B cell (primary cell): ENCODE measurements at regions of chr7 and their contacts with region 1.

Region 1: DNA sequence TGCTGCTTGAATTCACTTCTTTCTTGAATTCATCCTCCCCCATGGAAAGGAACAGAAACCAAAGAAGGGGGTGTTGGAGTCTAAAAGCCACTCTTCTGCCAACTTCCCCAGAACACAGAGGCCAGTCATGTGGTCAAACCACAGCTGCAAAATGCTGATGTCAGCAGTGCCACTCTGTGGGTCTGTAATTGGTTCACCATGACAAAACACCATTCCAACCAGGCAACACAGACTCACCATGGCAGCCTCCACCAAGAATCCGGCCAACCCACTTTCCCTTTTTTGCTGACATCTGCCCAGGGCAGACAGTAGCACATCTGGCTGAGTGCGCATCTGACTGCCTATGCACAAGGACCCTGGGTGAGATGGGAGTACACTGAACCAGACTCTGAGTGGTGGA is 16.8 kb downstream of the OSBPL3 start:
- DNase-seq: peak; percentile 88
- ATAC-seq: peak; percentile 88
- H3K4me3 ChIP-seq: no peak overlapping the region
- H3K4me3 Mint-ChIP-seq: peak overlapping the region; percentile 64
- H3K27ac ChIP-seq: peak overlapping the region; percentile 3 to 54
- H3K27ac Mint-ChIP-seq: peak overlapping the region; percentile 89
- H3K4me1 ChIP-seq: peaks cover 42 to 47% of the 10 kb centered on the region in 2 donors
- H3K4me1 Mint-ChIP-seq: peaks cover 80% of the 10 kb centered on the region
- H3K27me3 ChIP-seq: no peaks in the 10 kb centered on the region
- H3K27me3 Mint-ChIP-seq: no peaks in the 10 kb centered on the region
- CTCF ChIP-seq: no peak

Region 2: DNA sequence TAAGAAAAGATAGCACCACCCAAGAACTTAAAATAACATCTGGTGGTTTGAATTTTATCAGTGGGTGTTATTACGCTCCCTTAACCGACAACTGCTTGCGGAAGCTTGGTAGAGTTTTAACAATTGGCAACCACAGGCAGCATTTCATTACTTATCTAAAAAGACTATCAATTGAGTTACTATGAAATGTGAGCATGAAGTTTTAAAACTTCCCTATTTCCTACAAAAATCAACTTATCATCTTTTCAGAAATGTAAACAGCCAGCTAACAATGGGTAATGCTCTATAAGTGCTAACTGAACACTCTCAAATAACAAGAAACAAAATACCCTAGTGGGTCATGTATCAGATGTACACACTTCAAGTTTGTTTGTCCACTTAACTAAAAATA is 52.0 kb before region 1 on chr7:
- CTCF ChIA-PET with region 1: no interaction called
- POLR2A ChIA-PET with region 1: no interaction called
- intact Hi-C with region 1: loop called (anchors 5 kb)
- DNase-seq: peak; percentile 40
- ATAC-seq: peak; percentile 69
- H3K4me3 ChIP-seq: peak overlapping the region in 1 of 5 experiments; percentile 21
- H3K4me3 Mint-ChIP-seq: peak overlapping the region; percentile 73
- H3K27ac ChIP-seq: peak overlapping the region in 1 of 2 donors; percentile 17
- H3K27ac Mint-ChIP-seq: no peak overlapping the region
- H3K4me1 ChIP-seq: peaks cover 33 to 36% of the 10 kb centered on the region in 2 donors
- H3K4me1 Mint-ChIP-seq: peaks cover 50% of the 10 kb centered on the region
- H3K27me3 ChIP-seq: no peaks in the 10 kb centered on the region
- H3K27me3 Mint-ChIP-seq: no peaks in the 10 kb centered on the region
- CTCF ChIP-seq: no peak

Region 3: GRCh38 chr7:25148772-25149575 is 185.8 kb after region 1 on chr7:
- CTCF ChIA-PET with region 1: no interaction called
- POLR2A ChIA-PET with region 1: no interaction called
- intact Hi-C with region 1: no loop called
- DNase-seq: no peak
- ATAC-seq: no peak
- H3K4me3 ChIP-seq: no peak overlapping the region
- H3K4me3 Mint-ChIP-seq: no peak overlapping the region
- H3K27ac ChIP-seq: no peak overlapping the region
- H3K27ac Mint-ChIP-seq: no peak overlapping the region
- H3K4me1 ChIP-seq: no peaks in the 10 kb centered on the region
- H3K4me1 Mint-ChIP-seq: no peaks in the 10 kb centered on the region
- H3K27me3 ChIP-seq: no peaks in the 10 kb centered on the region
- H3K27me3 Mint-ChIP-seq: no peaks in the 10 kb centered on the region
- CTCF ChIP-seq: no peak